MCF 10A (cell line): ENCODE measurements at regions of chr3 and their contacts with region 1.

Region 1: GRCh38 chr3:119279101-119279554 is 15.1 kb upstream of the ARHGAP31 start:
- DNase-seq: peak; percentile 28
- H3K4me3 Mint-ChIP-seq: no peak overlapping the region
- H3K27ac Mint-ChIP-seq: no peak overlapping the region
- H3K4me1 Mint-ChIP-seq: no peaks in the 10 kb centered on the region
- H3K27me3 Mint-ChIP-seq: no peaks in the 10 kb centered on the region
- CTCF ChIP-seq: no peak

Region 2: DNA sequence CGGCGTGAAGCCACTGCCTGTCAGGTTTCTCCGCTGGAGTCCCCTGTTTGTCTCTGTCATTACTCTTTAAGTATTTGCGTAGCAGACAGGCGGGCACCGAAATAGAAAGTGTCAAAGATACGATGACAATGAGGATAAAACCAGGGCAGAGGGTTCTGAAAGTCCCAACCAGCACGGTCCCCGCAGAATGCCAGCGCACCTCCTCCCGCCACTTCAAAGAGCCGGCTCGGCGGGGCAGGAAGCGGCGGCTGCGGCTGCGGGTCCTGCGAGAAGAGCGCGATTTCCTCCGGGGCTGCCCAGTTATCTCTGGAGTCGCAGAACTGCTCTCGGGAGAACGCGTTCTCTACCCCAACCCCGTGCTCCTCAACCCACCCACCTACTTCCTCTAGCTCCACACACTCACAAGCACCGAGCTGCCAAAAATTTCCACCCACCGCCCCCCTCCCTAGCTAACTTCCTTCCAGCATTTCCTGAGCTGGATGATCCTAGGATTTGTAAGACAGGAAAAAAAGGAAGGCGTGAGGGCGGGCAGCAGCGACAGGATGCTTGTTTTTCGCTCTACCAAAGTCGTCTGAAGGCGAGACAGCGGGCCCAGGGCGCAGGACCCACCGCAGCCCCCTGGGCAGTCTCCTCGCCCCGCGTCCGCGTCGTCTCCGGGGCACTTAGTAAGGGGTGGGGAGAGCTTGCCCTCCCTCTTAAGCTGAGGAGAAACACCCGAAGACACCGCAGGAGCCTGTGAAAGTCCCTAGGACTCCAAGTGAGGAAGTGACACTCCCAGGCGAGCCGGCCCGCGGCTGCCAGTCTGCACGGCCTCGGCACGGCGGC is 15.0 kb after region 1 on chr3 and contains the start of gene ARHGAP31:
- CTCF ChIA-PET with region 1: interaction called, 13 read pairs
- POLR2A ChIA-PET with region 1: interaction called, 9 read pairs
- intact Hi-C with region 1: no loop called
- DNase-seq: peak; percentile 51
- H3K4me3 Mint-ChIP-seq: peak within 1 kb of the TSS; percentile 81
- H3K27ac Mint-ChIP-seq: peak within 1 kb of the TSS; percentile 63
- H3K4me1 Mint-ChIP-seq: peaks cover 13% of the 10 kb centered on the region
- H3K27me3 Mint-ChIP-seq: no peaks in the 10 kb centered on the region
- CTCF ChIP-seq: no peak
- total RNA-seq, gene ARHGAP31: 4.4 and 4.7 TPM in 2 replicates

Region 3: GRCh38 chr3:119352849-119353502 is 73.8 kb after region 1 on chr3:
- CTCF ChIA-PET with region 1: no interaction called
- POLR2A ChIA-PET with region 1: no interaction called
- intact Hi-C with region 1: loop called (anchors 1 kb)
- DNase-seq: peak; percentile 58
- H3K4me3 Mint-ChIP-seq: no peak overlapping the region
- H3K27ac Mint-ChIP-seq: no peak overlapping the region
- H3K4me1 Mint-ChIP-seq: peaks cover 5% of the 10 kb centered on the region
- H3K27me3 Mint-ChIP-seq: no peaks in the 10 kb centered on the region
- CTCF ChIP-seq: peak; percentile 28

Region 4: DNA sequence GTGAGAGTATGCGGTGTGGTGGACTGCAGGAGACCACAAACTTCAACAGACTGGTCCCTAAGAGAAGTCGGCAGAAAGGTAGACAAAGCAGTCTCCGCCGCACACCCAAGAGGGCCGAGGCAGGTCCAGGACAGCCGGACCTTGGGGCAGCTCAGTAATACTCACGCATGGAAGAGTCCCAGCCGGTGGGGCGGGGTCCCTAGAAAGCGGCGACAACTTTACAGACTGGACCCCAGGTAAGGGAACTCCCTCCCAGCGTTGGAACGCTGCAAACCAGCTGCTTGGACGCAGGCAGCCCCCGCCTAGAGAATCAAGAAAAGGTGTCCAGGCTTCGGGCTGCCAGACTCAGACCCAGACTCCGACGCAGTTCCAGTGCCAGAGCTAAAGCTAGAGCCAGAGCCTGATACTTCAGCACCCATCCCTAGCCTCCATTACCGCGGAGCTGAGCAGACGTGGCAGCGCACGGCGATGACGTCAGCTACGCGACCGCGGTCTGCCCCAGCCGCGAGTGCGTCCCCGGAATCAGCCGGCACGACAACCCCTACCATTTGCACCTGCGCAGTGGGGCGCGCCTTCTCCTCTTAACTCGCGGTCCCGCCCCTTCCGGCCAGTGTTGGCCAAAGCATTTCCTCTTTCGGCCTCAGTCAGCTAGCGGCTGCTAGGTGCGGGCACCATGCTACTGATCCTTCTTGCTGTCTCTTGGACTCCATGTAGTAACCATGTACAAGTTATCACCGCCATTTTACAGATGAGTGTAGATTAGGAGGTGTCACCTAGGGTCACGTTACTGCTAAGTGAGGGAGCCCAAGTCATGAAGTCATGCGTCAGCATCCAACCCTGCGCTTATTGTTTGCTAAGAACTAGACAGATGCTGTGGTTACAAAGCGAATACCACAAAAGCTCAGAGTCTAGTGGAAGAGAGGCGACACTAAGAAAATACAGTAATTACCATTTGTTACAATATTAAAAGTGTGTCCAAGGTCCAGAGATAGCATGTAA is 184.3 kb after region 1 on chr3 and contains the start of gene TMEM39A:
- CTCF ChIA-PET with region 1: interaction called, 7 read pairs
- POLR2A ChIA-PET with region 1: interaction called, 3 read pairs
- intact Hi-C with region 1: loop called (anchors 1 kb)
- DNase-seq: peak; percentile 98
- H3K4me3 Mint-ChIP-seq: peak within 1 kb of the TSS; percentile 89
- H3K27ac Mint-ChIP-seq: peak within 1 kb of the TSS; percentile 94
- H3K4me1 Mint-ChIP-seq: peaks cover 28% of the 10 kb centered on the region
- H3K27me3 Mint-ChIP-seq: no peaks in the 10 kb centered on the region
- CTCF ChIP-seq: no peak
- total RNA-seq, gene TMEM39A: 87.1 and 105 TPM in 2 replicates

Region 5: DNA sequence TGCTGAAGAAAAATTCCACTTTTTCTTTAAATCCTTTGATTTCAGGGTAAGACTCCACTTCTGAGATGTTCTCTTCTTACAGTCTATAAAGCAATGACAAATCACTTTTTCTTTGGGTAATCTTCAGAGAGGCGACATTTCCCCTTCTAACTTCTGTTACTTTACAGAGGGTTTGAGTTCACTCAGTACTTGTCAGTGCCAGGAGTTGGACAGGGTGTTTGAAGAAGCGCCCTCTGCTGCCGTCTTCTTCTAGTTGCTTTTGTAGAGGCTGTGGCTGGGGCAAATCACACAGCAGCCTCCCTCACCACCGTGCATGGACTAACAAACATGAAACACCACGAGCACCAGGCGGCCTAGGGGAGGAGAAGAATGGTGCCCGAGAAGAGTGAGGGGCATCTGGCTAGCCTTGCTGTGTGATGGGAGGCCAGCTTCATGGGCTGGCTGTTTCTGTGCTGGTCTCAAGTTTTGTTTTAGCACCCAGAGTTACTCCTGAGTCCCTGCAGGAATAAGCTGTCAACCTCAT is 280.4 kb after region 1 on chr3 and contains the start of gene CD80:
- CTCF ChIA-PET with region 1: no interaction called
- POLR2A ChIA-PET with region 1: no interaction called
- intact Hi-C with region 1: loop called (anchors 1 kb)
- DNase-seq: peak; percentile 57
- H3K4me3 Mint-ChIP-seq: no peak within 1 kb of the TSS
- H3K27ac Mint-ChIP-seq: no peak within 1 kb of the TSS
- H3K4me1 Mint-ChIP-seq: no peaks in the 10 kb centered on the region
- H3K27me3 Mint-ChIP-seq: no peaks in the 10 kb centered on the region
- CTCF ChIP-seq: peak; percentile 20
- total RNA-seq, gene CD80: not detected in 2 replicates

Region 6: GRCh38 chr3:120182724-120183524 is 903.8 kb after region 1 on chr3:
- CTCF ChIA-PET with region 1: no interaction called
- POLR2A ChIA-PET with region 1: no interaction called
- intact Hi-C with region 1: loop called (anchors 10 kb)
- DNase-seq: peak; percentile 80
- H3K4me3 Mint-ChIP-seq: no peak overlapping the region
- H3K27ac Mint-ChIP-seq: peak overlapping the region; percentile 83
- H3K4me1 Mint-ChIP-seq: peaks cover 27% of the 10 kb centered on the region
- H3K27me3 Mint-ChIP-seq: no peaks in the 10 kb centered on the region
- CTCF ChIP-seq: peak; percentile 42